ENCODE measurements at regions of chr17 and their contacts with region 1.

Region 1: DNA sequence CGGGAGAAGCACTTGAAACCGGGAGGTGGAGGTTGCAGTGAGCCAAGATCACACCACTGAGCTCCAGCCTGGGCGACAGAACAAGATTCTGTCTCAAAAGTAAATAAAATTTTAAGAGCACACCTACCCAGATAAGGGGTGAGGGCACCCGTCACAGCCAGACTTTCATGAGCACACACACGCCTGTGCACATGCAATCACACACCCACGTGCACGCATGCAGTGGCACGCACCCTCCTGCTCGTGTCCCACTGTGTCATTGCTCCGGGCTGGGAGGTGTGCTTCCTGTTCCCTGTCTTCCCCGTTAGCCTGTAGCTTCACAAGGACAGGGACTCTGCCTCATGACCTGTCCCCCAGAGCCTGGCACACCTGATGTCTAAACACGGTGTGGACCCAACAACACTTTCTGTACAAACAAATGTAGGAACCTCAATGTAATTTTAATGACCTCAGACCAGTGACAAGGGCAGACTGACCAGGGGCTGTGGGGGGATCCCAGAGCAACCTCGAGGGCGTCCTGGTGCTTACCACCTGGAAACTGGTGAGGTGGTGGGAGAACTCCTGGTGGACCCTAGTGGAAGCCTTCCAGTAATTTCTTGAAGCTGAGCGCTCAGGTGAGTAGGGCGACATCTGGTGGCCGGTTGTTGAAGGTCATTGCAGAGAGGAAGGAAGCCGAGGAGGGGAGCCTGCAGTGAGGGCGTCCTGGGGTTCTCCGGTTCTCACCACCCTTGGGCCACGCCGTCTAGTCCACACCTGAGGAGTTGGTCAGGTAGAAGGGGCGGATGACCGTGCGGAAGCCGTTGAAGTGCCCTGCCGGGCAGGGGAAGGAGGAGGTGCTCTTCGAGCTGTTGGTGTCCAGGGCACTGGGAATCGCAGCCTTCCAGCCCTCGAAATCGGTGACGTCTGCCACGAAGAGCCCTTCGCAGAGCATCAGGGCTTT is 8.6 kb downstream of the LGALS3BP start:
- DNase-seq: peak in 3 of 4 donors; percentile 83 to 87 (median 85)
- ATAC-seq: peak; percentile 62
- H3K4me3 ChIP-seq: no peak overlapping the region
- H3K27ac ChIP-seq: no peak overlapping the region
- H3K4me1 ChIP-seq: peaks cover 0 to 21% of the 10 kb centered on the region in 2 donors
- H3K27me3 ChIP-seq: no peaks in the 10 kb centered on the region
- CTCF ChIP-seq: peak; percentile 80 to 96

Region 2: GRCh38 chr17:78517421-78517820 is 453.7 kb before region 1 on chr17:
- intact Hi-C with region 1: no loop called
- DNase-seq: peak in 1 of 4 donors; percentile 47
- ATAC-seq: no peak
- H3K4me3 ChIP-seq: no peak overlapping the region
- H3K27ac ChIP-seq: no peak overlapping the region
- H3K4me1 ChIP-seq: no peaks in the 10 kb centered on the region
- H3K27me3 ChIP-seq: no peaks in the 10 kb centered on the region
- CTCF ChIP-seq: no peak

Region 3: GRCh38 chr17:78865682-78866390 is 105.3 kb before region 1 on chr17:
- intact Hi-C with region 1: loop called in 1 of 2 experiments (anchors 5 kb)
- DNase-seq: peak; percentile 64 to 91 (median 82)
- ATAC-seq: peak; percentile 86
- H3K4me3 ChIP-seq: no peak overlapping the region
- H3K27ac ChIP-seq: peak overlapping the region in 1 of 2 donors; percentile 83
- H3K4me1 ChIP-seq: peaks cover 4 to 59% of the 10 kb centered on the region in 2 donors
- H3K27me3 ChIP-seq: no peaks in the 10 kb centered on the region
- CTCF ChIP-seq: peak; percentile 91 to 95